AG04449 (cell line): ENCODE measurements at regions of chr1 and their contacts with region 1.

Region 1: GRCh38 chr1:78132174-78132947 is 86.6 kb downstream of the GIPC2 start:
- DNase-seq: no peak
- H3K4me3 ChIP-seq: no peak overlapping the region
- CTCF ChIP-seq: no peak

Region 2: DNA sequence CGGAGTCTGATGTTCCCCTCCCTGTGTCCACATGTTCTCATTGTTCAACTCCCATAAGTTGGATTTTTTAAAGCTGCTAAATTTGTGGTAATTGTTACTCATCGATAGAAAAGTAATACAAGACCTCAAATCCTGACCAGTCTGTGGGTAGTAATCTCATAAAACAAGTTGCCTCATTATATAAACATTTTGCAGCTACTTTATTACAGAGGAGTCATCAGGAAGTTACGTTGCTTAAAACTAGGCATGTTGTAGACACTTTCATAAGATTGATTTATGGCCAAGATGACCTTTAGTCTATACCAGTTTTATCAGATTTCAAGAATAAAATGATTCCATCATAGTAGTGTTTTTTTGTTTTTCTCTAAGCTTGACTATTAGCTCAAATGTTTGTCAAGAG is 122.2 kb after region 1 on chr1:
- CTCF ChIA-PET with region 1: no interaction called
- POLR2A ChIA-PET with region 1: no interaction called
- DNase-seq: no peak
- H3K4me3 ChIP-seq: no peak overlapping the region
- CTCF ChIP-seq: no peak

Region 3: DNA sequence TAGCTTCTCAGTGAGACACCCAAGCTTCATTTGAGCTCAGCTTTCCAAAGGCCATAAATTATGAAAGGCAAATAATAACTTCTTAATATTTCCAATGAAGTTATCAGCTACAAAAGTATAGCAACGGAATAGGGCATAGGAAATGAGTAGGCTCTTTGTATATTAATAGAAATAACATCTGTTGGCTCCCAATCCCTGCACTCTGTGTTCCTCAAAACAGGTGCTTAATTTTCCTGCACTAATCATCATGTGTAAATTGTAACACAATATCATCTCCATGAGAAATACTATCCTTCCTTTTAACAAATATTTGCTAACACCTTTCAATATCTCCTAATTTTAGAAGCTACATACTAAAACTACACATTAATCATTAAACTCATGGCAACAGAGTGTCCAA is 468.7 kb after region 1 on chr1:
- CTCF ChIA-PET with region 1: interaction called, 160 read pairs
- POLR2A ChIA-PET with region 1: no interaction called
- DNase-seq: no peak
- H3K4me3 ChIP-seq: no peak overlapping the region
- CTCF ChIP-seq: no peak

Region 4: GRCh38 chr1:78676347-78676982 is 544.1 kb after region 1 on chr1:
- CTCF ChIA-PET with region 1: interaction called, 22 read pairs
- POLR2A ChIA-PET with region 1: no interaction called
- DNase-seq: peak; percentile 12
- H3K4me3 ChIP-seq: no peak overlapping the region
- CTCF ChIP-seq: peak; percentile 37